ENCODE measurements at regions of chr12 and their contacts with region 1.

Region 1: DNA sequence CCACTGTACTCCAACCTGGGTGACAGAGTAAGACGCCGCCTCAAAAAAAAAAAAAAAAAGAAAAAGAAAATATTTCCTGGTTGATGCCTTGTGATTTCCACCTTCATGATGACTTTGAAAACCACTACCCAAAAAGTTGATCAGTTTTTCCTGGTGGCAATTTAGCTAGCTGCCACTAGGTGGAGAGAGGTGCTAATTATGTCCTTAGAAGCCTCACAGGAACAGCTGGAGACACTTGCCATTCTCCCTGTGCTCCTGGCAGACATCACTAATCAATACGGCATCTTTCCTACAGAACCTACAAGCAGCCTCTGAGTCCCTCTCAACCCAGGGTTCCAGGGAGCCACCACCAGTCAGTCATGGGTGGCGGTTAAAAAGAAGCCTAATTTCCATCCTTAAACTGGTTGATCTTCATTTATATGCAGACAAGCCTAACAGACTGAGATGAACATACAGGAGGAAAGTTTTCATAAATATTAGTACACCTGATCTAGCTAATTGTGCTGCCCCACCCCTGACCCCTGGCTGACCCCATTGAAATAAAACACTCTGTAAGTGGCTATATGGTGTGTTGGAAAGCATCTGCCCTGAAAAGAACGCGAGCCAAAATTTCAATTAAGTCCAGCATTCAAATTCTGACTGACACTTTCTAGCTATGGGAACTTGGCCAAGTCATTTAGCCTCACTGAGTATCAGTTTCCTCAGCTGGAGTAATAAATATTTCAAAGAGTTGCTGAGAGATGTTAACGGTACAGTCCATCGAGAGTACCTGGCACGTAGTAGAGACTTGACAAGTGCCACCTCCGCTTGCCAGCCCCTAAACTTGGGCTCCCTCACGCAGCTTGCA is 6.2 kb upstream of the OAS1 start:
- DNase-seq: peak; percentile 74
- ATAC-seq: peak; percentile 31
- H3K4me3 ChIP-seq: no peak overlapping the region
- H3K27ac ChIP-seq: no peak overlapping the region
- H3K4me1 ChIP-seq: peaks cover 27% of the 10 kb centered on the region
- H3K27me3 ChIP-seq: peaks cover 35% of the 10 kb centered on the region
- CTCF ChIP-seq: peak; percentile 83

Region 2: GRCh38 chr12:112916270-112916669 is 15.7 kb after region 1 on chr12:
- CTCF ChIA-PET with region 1: no interaction called
- POLR2A ChIA-PET with region 1: no interaction called
- intact Hi-C with region 1: no loop called
- DNase-seq: peak; percentile 80
- ATAC-seq: peak; percentile 85
- H3K4me3 ChIP-seq: no peak overlapping the region
- H3K27ac ChIP-seq: no peak overlapping the region
- H3K4me1 ChIP-seq: peaks cover 5% of the 10 kb centered on the region; the same call in 1 of the 2 replicates
- H3K27me3 ChIP-seq: no peaks in the 10 kb centered on the region
- CTCF ChIP-seq: no peak

Region 3: DNA sequence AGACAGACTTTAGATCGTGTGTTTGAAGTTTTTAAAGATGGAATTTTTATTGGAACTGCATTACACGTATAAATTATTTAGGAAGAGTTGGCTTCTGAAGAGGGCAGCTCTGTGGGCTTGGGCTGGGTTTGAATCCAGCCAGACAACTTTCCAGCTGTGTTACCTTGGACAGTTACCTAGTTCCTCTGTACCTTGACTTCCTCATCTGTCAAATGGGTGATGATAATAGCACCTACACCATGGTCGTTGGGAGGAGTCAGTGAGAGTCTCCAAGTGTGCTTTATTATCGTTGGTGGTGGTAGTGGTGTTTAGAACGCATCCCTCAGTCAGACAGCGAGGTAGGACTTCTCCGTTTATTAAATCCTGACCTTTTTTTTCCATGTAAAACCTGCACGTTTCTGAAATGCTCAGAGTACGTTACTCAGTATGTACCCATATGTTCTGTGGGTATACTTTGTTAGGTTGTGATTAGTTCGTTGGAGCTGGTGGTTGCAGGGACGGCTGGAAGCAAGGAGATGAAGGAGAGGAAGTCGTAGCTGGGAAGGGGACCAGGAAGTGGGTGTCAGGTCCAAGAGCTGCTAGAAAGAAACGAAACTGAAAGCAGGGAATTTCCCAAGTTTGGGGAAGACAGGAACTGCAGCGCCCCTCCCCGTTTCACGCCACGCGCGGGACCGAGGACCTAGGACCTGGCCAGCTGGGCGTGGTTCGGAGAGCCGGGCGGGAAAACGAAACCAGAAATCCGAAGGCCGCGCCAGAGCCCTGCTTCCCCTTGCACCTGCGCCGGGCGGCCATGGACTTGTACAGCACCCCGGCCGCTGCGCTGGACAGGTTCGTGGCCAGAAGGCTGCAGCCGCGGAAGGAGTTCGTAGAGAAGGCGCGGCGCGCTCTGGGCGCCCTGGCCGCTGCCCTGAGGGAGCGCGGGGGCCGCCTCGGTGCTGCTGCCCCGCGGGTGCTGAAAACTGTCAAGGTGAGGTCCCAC is 37.5 kb after region 1 on chr12 and contains the start of gene OAS3:
- CTCF ChIA-PET with region 1: interaction called, 4 read pairs
- POLR2A ChIA-PET with region 1: no interaction called
- intact Hi-C with region 1: loop called (anchors 1 kb)
- DNase-seq: peak; percentile 87
- ATAC-seq: peak; percentile 85
- H3K4me3 ChIP-seq: peak within 1 kb of the TSS; percentile 84
- H3K27ac ChIP-seq: peak within 1 kb of the TSS; percentile 12
- H3K4me1 ChIP-seq: peaks cover 17% of the 10 kb centered on the region
- H3K27me3 ChIP-seq: no peaks in the 10 kb centered on the region
- CTCF ChIP-seq: 0 out of 2 replicates have a peak, but pooled peaks have one; percentile 14
- total RNA-seq, gene OAS3: 25.5 and 28.8 TPM in 2 replicates

Region 4: DNA sequence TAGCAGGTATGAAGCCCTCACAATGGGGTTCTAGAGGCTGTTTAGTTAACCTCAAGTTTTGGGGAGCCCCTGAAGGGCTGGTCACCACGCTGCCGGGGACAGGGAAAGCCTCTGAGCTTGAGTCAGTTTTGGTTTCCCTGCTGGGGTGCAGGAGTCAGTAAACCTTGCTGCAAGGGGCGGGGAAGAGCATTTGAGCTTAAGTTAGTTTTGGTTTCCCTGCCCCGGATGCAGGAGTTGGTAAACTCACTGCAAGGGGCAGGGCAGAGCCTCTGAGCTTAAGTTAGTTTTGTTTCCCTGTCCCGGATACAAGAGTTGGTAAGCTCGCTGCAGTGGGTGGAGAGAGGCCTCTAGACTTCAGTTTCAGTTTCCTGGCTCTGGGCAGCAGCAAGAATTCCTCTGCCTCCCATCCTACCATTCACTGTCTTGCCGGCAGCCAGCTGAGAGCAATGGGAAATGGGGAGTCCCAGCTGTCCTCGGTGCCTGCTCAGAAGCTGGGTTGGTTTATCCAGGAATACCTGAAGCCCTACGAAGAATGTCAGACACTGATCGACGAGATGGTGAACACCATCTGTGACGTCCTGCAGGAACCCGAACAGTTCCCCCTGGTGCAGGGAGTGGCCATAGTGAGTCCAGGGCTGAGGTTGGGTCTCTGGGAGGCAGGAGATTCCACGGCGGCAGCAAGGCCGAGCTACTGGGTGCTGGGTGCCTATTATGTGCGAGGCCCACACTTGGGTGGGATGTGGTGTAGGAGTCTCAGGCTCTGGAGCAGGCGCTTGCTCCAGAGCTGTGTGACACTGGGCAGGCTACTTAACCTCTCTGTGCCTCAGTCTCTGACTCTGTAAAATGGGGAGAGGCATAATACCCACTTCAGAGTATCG is 77.9 kb after region 1 on chr12 and contains the start of gene OAS2:
- CTCF ChIA-PET with region 1: no interaction called
- POLR2A ChIA-PET with region 1: interaction called, 21 read pairs
- intact Hi-C with region 1: loop called (anchors 1 kb)
- DNase-seq: peak; percentile 78
- ATAC-seq: peak; percentile 95
- H3K4me3 ChIP-seq: peak within 1 kb of the TSS; percentile 64
- H3K27ac ChIP-seq: peak within 1 kb of the TSS; percentile 11; the same call in 1 of the 2 replicates
- H3K4me1 ChIP-seq: peaks cover 14% of the 10 kb centered on the region
- H3K27me3 ChIP-seq: no peaks in the 10 kb centered on the region
- CTCF ChIP-seq: no peak
- total RNA-seq, gene OAS2: 5.8 and 10.5 TPM in 2 replicates

Region 5: DNA sequence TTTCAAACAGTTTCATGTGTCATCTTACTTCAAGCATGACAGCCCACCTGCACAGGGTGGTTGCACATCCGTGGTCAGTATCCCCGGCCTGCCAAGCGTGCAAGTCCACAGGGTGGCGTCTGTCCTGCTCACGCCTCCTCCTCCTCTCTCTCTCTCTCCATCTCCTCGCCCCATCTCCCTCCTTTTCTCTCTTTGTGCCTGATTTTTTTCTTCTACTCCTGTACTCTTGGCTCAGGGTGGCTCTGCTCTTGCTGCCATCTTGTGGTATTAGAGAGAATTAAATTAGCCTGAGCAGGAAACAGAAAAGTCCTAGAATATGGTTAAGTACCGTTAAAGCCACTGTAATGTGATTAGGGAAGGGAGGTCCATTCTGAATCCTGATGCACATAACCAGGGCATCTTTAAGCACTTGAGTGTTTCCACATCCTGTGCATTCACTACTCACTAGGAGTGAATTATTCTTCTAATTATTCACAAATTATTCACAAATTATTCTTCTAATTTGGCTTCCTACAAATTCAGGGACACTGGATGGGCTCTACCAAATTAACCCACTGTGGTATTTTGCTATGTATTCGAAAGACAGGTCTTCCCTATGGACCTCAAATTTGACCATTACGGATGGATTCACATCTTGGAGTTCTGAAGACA is 130.5 kb after region 1 on chr12:
- CTCF ChIA-PET with region 1: no interaction called
- POLR2A ChIA-PET with region 1: no interaction called
- intact Hi-C with region 1: loop called (anchors 1 kb)
- DNase-seq: peak; percentile 86
- ATAC-seq: peak; percentile 98
- H3K4me3 ChIP-seq: no peak overlapping the region
- H3K27ac ChIP-seq: no peak overlapping the region
- H3K4me1 ChIP-seq: no peaks in the 10 kb centered on the region
- H3K27me3 ChIP-seq: no peaks in the 10 kb centered on the region
- CTCF ChIP-seq: peak; percentile 93